BJ (cell line): ENCODE measurements at regions of chr17 and their contacts with region 1.

Region 1: DNA sequence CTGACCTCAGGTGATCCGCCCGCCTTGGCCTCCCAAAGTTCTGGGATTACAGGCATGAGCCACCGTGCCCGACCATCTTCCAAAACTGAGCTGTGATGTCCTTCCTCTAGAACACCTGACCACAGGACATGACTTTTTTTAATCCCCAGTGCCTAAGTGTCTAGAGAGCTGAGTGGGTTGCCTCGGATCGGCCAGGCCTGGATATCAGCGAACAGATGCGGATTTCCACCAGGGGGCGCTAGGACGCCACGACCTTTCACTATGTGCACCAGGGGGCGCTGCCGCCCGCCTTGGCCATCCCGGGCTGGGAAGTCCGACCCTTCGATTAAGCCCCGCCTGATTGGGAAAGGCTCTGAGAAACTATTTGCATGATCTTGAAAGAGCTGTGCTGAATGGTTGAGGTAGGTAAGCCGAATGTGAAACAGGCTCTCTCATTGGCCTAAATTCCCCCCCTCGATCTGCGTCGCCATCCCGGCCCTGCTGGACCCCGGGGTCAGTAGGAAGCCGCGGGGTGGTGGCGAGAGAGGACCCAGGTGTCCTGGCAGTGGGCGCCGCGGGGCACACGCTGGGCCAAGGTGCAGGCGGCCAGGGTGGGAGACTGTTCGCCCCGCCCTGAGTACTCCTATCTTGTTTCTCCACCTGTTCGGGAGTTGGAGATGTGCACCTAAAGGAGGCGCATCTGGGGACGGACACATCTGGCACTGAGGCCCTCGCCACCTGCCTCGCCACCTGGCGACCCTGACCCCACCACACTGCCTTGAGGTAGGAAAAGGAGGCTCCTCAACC is at the start of gene ACBD4:
- DNase-seq: peak; percentile 79
- H3K4me3 ChIP-seq: peak within 1 kb of the TSS; percentile 83
- H3K27me3 ChIP-seq: no peaks in the 10 kb centered on the region
- CTCF ChIP-seq: peak; percentile 100
- polyA plus RNA-seq, gene ACBD4: 5.4 and 7.3 TPM in 2 replicates

Region 2: DNA sequence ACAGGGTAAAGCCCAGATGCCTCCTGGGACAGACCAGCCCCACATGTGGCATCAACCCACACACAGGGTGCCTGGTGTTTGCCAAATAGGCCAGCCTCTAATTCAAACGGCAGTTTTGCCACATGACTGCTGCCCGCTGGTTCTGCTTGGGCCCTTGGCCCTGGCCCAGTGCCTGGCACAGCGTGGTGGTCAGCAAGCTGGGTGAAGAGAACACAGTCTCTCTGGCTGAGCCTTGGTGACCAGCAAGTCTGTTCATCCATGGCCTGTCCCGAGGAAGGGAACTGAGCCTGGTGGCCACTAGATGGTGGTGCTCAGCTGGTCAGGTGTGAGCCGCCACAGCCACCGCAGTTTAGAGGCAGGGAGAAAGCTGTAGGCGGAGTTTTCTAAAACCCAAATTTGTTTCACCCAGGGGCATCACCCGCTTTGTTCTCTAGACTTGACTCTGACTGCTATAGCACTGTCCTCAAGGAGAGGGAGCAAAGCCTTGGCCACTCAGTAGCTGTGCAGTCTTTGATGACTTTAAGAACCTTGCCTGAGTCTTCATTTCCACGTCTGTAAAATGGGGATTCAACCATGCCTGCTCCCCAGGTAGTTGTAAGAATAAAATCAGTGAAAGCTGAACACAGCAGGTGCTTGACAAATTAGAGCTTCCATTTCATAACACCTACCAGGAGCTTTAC is 215.4 kb before region 1 on chr17:
- CTCF ChIA-PET with region 1: interaction called, 19 read pairs
- POLR2A ChIA-PET with region 1: no interaction called
- DNase-seq: no peak
- H3K4me3 ChIP-seq: no peak overlapping the region
- H3K27me3 ChIP-seq: no peaks in the 10 kb centered on the region
- CTCF ChIP-seq: peak; percentile 85

Region 3: DNA sequence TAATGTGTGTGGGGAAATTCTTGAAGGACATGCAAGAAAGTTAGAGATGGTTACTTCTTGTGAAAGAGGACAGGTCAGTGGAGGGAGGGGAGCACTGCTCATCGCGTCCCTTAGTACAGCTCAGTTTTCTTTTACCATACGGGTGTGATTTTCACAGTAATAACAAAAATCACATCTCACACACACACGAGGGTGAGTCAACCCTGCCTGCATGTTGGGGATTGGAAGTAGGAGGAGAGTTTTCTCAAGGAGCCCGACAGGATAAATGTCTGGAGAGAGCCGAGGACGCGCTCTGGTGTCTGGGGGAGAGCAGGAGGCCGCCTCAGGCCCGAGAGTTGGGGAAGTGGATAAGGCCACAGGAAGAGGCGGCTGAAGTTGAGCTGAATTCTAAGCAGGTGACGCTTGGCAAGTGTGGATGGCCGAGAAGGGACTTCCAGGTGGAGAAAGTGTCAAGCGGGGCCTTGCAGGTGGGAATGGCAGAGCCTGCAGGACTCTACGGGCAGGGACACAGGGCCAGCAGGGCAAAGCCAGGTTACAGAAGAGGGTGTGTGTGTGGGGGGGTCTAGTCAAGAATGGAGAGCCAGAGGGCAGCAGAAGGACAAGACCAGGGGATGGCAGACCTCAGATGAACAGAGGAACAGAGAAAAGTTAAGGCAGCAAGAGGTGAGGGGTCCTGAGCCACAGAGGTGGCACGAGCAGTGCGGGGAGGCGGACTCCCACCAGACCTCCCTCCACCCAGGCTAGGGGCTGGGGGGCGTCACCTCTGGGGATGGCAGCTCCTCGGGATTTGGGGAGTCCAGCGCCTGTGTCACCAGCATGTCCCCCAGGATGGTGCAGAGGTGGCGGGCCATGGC is 19.3 kb before region 1 on chr17:
- CTCF ChIA-PET with region 1: interaction called, 11 read pairs
- POLR2A ChIA-PET with region 1: no interaction called
- DNase-seq: no peak
- H3K4me3 ChIP-seq: no peak overlapping the region
- H3K27me3 ChIP-seq: no peaks in the 10 kb centered on the region
- CTCF ChIP-seq: no peak

Region 4: DNA sequence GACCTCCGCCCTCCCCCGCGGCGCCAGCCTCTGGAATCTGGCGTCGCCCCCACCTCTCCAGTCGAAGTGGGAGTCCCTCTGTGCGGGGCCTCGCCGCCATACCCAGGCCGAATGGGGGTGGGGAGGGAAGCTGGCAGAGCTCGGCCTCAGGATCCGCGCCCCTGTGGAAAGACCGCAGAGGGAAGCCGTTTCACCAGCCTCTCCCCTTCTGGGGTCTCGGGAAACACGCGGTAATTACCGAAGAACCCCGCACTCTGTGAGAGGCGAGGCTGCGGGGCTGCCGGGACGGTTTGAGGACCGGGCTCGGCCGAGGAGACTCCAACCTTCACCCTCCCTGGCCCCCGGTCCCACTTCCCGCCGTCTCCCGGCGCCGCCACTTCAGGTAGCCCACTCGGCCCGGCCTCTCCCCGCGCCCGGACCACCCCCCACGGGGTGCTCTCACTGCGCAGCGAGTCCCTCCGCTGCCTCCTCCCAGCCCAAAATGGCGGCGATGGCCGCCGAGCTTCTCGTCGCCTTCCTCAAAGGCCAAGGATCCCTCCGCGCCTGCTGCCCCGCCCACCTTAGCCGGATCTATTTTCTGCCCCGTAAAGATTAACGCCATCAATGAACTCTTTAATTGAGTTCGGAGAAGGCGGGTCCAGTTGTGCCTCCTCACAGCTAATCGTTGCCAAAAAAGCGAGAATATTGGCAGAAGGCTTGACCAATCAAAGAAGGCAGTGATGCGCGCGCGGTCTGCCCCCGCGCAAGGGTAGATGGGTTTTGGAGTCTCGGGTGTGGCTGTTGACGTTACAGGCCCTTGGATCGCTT is 25.8 kb after region 1 on chr17:
- CTCF ChIA-PET with region 1: interaction called, 21 read pairs
- POLR2A ChIA-PET with region 1: no interaction called
- DNase-seq: peak; percentile 99
- H3K4me3 ChIP-seq: peak overlapping the region; percentile 81
- H3K27me3 ChIP-seq: no peaks in the 10 kb centered on the region
- CTCF ChIP-seq: no peak

Region 5: GRCh38 chr17:45197555-45198334 is 62.4 kb after region 1 on chr17:
- CTCF ChIA-PET with region 1: interaction called, 204 read pairs
- POLR2A ChIA-PET with region 1: no interaction called
- DNase-seq: no peak
- H3K4me3 ChIP-seq: no peak overlapping the region
- H3K27me3 ChIP-seq: no peaks in the 10 kb centered on the region
- CTCF ChIP-seq: peak; percentile 100

Region 6: GRCh38 chr17:45235416-45236281 is 100.3 kb after region 1 on chr17:
- CTCF ChIA-PET with region 1: interaction called, 47 read pairs
- POLR2A ChIA-PET with region 1: no interaction called
- DNase-seq: no peak
- H3K4me3 ChIP-seq: no peak overlapping the region
- H3K27me3 ChIP-seq: no peaks in the 10 kb centered on the region
- CTCF ChIP-seq: peak; percentile 86